ENCODE measurements at regions of chr22 and their contacts with region 1.

Region 1: GRCh38 chr22:33018232-33018864 is 39.8 kb downstream of the SYN3 start:
- DNase-seq: peak; percentile 18
- ATAC-seq: peak; percentile 87
- H3K4me3 ChIP-seq: no peak overlapping the region
- H3K27ac ChIP-seq: no peak overlapping the region
- H3K4me1 ChIP-seq: no peaks in the 10 kb centered on the region
- H3K27me3 ChIP-seq: peaks cover 7% of the 10 kb centered on the region; the same call in 1 of the 2 replicates
- CTCF ChIP-seq: peak; percentile 26 to 94 (median 90); a peak in 5 of 6 replicates
- POLR2A ChIP-seq: no peak
- RAD21 ChIP-seq: peak; percentile 56

Region 2: DNA sequence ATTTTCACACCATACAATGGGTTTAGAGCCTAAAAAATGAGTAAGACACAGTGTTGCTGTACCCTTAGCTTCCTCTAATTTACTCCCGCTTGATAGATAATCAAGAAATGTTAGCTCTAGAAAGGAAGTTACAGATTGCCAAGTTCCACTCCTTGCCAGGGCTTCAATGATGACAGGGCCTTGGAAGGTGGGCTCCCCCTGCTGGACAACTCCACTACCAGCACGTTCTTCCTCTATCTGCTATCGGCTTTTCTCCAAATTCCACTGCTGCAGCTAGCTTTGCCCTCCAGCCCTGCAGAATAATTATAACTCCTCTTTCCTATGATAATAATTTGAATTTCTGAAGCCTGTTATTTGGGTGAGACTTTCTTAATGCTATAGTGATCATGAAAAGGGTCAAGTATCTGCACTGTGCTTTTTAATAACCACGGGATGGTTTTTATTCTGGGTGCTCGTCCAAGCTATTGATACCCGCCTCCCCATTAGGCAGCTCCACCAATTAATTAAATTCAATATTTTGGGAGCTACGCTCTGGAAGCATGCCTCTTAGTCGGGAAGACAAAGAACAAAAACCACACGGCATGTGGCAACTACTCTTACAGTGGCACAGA is 30.9 kb after region 1 on chr22:
- CTCF ChIA-PET with region 1: interaction called, 15 read pairs
- POLR2A ChIA-PET with region 1: no interaction called
- RAD21 ChIA-PET with region 1: interaction called, 3 to 4 read pairs
- intact Hi-C with region 1: loop called (anchors 1 kb)
- DNase-seq: peak; percentile 44
- ATAC-seq: peak; percentile 78
- H3K4me3 ChIP-seq: no peak overlapping the region
- H3K27ac ChIP-seq: no peak overlapping the region
- H3K4me1 ChIP-seq: no peaks in the 10 kb centered on the region
- H3K27me3 ChIP-seq: peaks cover 10% of the 10 kb centered on the region
- CTCF ChIP-seq: peak; percentile 27 to 90 (median 84); a peak in 4 of 6 replicates
- POLR2A ChIP-seq: no peak
- RAD21 ChIP-seq: peak; percentile 23; the same call in 1 of the 2 replicates

Region 3: GRCh38 chr22:33202455-33202854 is 184.1 kb after region 1 on chr22:
- CTCF ChIA-PET with region 1: interaction called, 3 read pairs
- POLR2A ChIA-PET with region 1: no interaction called
- RAD21 ChIA-PET with region 1: no interaction called
- intact Hi-C with region 1: loop called (anchors 5 kb)
- DNase-seq: no peak
- ATAC-seq: no peak
- H3K4me3 ChIP-seq: no peak overlapping the region
- H3K27ac ChIP-seq: no peak overlapping the region
- H3K4me1 ChIP-seq: no peaks in the 10 kb centered on the region
- H3K27me3 ChIP-seq: no peaks in the 10 kb centered on the region
- CTCF ChIP-seq: no peak
- POLR2A ChIP-seq: no peak
- RAD21 ChIP-seq: no peak

Measured in HCT116 (cell line).